Left lung (tissue), 14 donors: ENCODE measurements at regions of chrX and their contacts with region 1.

Region 1: DNA sequence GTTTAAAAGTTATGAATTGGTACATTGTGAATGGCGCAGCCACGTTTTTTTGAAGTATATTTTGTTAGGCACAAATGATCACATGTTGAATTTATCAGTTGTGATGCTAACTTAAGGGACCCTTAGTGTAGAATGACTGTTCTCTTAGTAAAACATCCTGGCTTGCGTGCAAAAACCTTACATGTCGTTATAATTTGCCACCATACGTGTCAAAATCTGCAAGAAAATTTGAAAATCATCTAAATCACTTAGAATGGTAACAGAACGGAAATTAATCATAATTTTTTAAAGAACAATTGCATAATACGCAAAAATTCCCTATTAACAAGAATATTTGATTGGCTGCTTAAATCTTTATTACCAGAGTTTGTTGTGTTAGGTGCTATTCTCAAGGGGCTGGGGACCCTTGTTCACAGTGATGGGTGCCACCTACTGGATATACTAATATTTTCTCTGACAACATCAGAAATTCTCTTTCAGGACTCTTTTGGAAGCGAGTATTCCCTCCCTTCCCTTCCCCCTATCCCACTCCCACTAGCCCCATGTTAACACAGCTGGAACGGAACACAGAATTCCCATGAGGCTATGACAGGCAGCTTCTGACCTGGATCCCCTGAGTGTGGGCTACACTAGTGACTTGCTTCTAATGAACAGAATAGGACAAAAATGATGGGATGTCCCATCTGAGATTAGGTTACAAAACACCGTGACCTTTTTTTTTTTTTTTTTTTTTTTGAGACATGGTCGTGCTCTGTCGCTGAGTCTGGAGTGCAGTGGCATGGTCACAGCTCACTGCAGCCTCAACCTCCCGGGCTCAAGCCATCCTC is 71.8 kb downstream of the SUPT20HL2 start:
- DNase-seq: peak in 1 of 4 donors; percentile 48
- ATAC-seq: peak; percentile 84
- H3K4me3 ChIP-seq: no peak overlapping the region
- H3K27ac ChIP-seq: no peak overlapping the region
- H3K4me1 ChIP-seq: no peaks in the 10 kb centered on the region
- H3K27me3 ChIP-seq: peaks cover 0 to 14% of the 10 kb centered on the region in 2 donors
- CTCF ChIP-seq: peak in 1 of 2 donors; percentile 43

Region 2: GRCh38 chrX:24081661-24082264 is 160.3 kb before region 1 on chrX:
- intact Hi-C with region 1: loop called in 1 of 2 experiments (anchors 10 kb)
- DNase-seq: peak in 3 of 4 donors; percentile 13 to 45 (median 35)
- ATAC-seq: peak; percentile 93
- H3K4me3 ChIP-seq: peak overlapping the region in 1 of 2 donors; percentile 5
- H3K27ac ChIP-seq: no peak overlapping the region
- H3K4me1 ChIP-seq: no peaks in the 10 kb centered on the region
- H3K27me3 ChIP-seq: no peaks in the 10 kb centered on the region
- CTCF ChIP-seq: no peak

Region 3: DNA sequence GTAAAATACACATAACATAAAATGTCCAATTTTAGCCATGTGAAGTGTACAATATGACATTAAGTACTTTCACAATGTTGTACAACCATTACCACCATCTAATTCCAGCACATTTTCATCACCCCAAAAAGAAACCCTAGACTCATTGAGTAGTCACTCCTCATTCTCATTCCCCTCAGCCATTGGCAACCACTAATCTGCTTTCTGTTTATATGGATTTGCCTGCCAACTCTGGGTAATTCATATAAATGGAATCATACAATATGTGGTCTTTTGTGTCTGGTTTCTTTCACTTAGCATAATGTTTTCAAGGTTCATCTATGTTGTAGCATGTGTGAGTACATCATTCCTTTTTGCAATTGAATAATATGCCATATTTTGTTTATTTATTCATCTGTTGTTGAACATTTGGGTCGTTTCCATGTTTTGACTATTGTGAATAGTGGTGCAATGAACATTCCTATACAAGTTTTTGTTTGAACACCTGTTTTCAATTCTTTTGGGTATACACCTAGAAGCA is 144.2 kb before region 1 on chrX:
- intact Hi-C with region 1: no loop called
- DNase-seq: no peak
- ATAC-seq: no peak
- H3K4me3 ChIP-seq: no peak overlapping the region
- H3K27ac ChIP-seq: no peak overlapping the region
- H3K4me1 ChIP-seq: no peaks in the 10 kb centered on the region
- H3K27me3 ChIP-seq: no peaks in the 10 kb centered on the region
- CTCF ChIP-seq: no peak